ENCODE measurements at regions of chr5 and their contacts with region 1.

Region 1: DNA sequence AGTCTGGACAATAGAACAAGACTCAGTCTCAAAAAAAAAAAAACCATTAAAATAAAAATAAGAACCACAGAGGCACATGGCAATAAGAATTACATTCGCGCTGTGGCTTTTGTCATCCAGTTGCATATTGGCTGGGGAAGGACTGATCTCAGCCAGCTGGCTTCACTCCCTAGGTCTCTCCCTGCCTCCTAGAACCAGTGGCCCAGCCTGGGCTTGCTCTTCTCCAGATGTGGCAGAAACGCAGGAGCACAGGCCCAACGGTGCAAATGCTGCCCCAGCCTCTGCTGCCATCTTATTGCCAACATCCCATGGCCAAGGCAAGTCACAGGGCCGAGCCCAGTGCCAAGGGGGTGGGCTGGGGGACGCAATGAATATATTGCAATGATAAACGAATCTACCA is 37.0 kb downstream of the NKX2-5 start:
- DNase-seq: no peak
- ATAC-seq: peak; percentile 45

Region 2: GRCh38 chr5:173229966-173230689 is 32.1 kb after region 1 on chr5:
- intact Hi-C with region 1: loop called (anchors 1 kb)
- DNase-seq: no peak
- ATAC-seq: peak; percentile 28